ENCODE measurements at regions of chr9 and their contacts with region 1.

Region 1: GRCh38 chr9:38656896-38657295 is 36.5 kb upstream of the ANKRD18A start:
- DNase-seq: no peak
- H3K4me3 ChIP-seq: no peak overlapping the region
- H3K27ac ChIP-seq: no peak overlapping the region
- H3K4me1 ChIP-seq: no peaks in the 10 kb centered on the region
- H3K27me3 ChIP-seq: peaks cover 7% of the 10 kb centered on the region
- CTCF ChIP-seq: no peak

Region 2: GRCh38 chr9:38620483-38621433 is 36.1 kb before region 1 on chr9 and contains the start of gene ANKRD18A:
- CTCF ChIA-PET with region 1: no interaction called
- POLR2A ChIA-PET with region 1: no interaction called
- intact Hi-C with region 1: loop called (anchors 5 kb)
- DNase-seq: peak; percentile 65
- H3K4me3 ChIP-seq: peak within 1 kb of the TSS; percentile 31
- H3K27ac ChIP-seq: no peak within 1 kb of the TSS
- H3K4me1 ChIP-seq: no peaks in the 10 kb centered on the region
- H3K27me3 ChIP-seq: peaks cover 85% of the 10 kb centered on the region
- CTCF ChIP-seq: peak; percentile 70
- total RNA-seq, gene ANKRD18A: not detected in 2 replicates

Measured in A673 (cell line).